ENCODE measurements at regions of chr19 and their contacts with region 1.

Region 1: DNA sequence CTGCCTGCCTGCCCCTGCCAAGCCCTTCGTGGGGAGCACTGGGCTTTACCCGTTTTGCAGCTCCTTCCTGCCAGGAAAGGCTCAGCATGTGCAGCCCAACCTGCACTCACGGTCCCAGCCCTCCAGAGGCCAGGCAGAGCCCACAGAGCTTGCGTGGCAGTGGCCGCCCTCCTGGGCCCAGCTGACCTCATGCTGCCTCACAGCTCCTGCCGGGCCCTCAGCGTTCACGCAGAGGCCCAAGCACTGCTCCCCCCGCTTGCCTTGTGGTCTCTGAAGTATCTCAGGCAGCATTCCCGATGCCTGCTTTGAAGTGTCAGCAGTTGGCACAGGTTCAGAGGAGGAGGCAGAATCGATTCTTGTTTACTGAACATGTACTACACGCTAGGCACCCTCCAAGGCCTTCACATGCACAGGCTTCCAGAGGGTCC is 32.5 kb downstream of the CAPN12 start:
- DNase-seq: no peak
- H3K4me3 ChIP-seq: no peak overlapping the region
- H3K27ac ChIP-seq: no peak overlapping the region
- H3K4me1 ChIP-seq: no peaks in the 10 kb centered on the region
- H3K27me3 ChIP-seq: no peaks in the 10 kb centered on the region; a peak in 1 of 7 replicates
- CTCF ChIP-seq: no peak
- EP300 ChIP-seq: no peak
- POLR2A ChIP-seq: no peak
- RAD21 ChIP-seq: no peak

Region 2: DNA sequence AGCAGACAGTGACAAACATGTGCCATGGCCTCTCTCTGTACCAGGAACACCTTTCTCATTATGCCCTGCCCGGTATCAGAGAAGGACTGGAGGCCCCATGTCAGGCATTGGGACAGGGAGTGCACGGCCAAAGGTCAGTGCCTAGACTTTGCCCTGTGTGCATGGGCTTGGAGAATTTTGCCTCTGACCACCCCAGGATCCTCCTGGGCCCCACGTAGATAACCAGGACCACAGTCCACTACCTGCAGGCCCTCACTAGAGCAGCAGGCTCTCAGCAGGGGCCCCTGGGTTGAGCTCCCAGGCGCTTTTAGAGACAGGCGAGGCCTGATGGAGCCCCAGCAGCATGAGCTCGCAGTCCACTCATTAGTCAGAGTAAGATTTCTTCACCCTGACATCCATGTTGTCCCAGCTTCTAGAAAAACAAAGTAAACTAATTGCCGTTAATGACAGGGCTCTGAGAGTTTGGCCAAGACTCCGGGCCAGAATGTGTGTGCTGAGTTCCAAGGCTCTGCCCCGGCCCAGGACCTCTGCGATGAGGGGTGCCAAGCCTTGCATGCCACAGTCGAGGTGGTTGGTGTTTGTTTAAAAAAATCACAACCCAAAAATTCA is 10.2 kb before region 1 on chr19:
- CTCF ChIA-PET with region 1: interaction called, 6 read pairs
- POLR2A ChIA-PET with region 1: interaction called, 13 read pairs
- DNase-seq: no peak
- H3K4me3 ChIP-seq: no peak overlapping the region
- H3K27ac ChIP-seq: no peak overlapping the region
- H3K4me1 ChIP-seq: peaks cover 0 to 16% (median 9%) of the 10 kb centered on the region in 4 experiments; a peak in 5 of 7 replicates
- H3K27me3 ChIP-seq: no peaks in the 10 kb centered on the region; a peak in 1 of 7 replicates
- CTCF ChIP-seq: no peak
- EP300 ChIP-seq: no peak
- POLR2A ChIP-seq: no peak
- RAD21 ChIP-seq: no peak

Region 3: DNA sequence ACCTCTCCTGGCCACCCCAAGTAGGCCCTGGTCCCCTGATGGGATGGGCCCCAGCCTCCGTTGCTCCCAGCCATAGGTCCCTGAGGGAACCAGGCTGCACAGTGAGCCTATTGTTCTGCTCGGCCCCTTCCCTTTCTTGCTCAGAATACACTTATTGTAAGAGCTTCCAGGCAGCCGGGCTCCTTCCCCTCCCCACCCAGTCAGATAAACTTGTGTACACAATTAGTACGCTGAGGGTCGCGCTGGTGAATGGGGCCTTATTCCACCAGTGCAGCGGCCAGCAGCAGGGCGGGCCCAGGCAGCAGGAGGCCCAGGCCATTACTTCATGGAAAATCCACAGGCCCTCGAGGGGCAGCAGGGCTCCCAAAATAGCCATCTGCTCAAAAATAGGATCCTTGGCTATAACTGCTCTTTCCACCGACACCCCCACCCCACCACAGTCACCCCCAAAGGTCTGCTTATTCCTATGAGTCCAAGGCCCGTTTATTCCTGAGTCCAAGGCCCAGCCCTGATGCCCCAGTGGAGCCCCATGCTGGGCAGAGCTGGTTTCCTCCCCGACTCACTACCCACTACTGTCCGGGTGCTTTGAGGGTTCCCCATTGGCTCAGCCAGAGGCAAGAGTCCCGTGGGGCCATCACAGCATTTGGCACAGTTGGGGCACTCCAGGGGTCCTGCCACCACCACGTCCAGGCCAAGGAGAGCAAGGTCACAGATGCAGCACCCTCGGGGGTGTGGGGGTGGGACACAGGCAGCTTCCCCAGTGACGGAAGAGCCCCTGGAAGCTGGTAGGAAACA is 10.4 kb after region 1 on chr19:
- CTCF ChIA-PET with region 1: interaction called, 11 read pairs
- POLR2A ChIA-PET with region 1: interaction called, 8 read pairs
- DNase-seq: no peak
- H3K4me3 ChIP-seq: no peak overlapping the region
- H3K27ac ChIP-seq: 0 out of 2 replicates have a peak overlapping the region, but pooled peaks have one; percentile 0
- H3K4me1 ChIP-seq: no peaks in the 10 kb centered on the region
- H3K27me3 ChIP-seq: no peaks in the 10 kb centered on the region
- CTCF ChIP-seq: no peak
- EP300 ChIP-seq: no peak
- POLR2A ChIP-seq: no peak
- RAD21 ChIP-seq: no peak

Region 4: GRCh38 chr19:38975214-38975860 is 263.6 kb after region 1 on chr19 and contains the start of gene FBXO17:
- CTCF ChIA-PET with region 1: no interaction called
- POLR2A ChIA-PET with region 1: no interaction called
- DNase-seq: peak in 1 of 2 experiments; percentile 84
- H3K4me3 ChIP-seq: peak within 1 kb of the TSS; percentile 48 to 82 (median 74)
- H3K27ac ChIP-seq: peak within 1 kb of the TSS; percentile 12; the same call in 1 of the 2 replicates
- H3K4me1 ChIP-seq: peaks cover 0 to 7% (median 3%) of the 10 kb centered on the region in 4 experiments; a peak in 3 of 7 replicates
- H3K27me3 ChIP-seq: 0 out of 7 replicates have a peak, but pooled peaks cover 0 to 3% (median 0%) of the 10 kb centered on the region in 4 experiments
- CTCF ChIP-seq: no peak
- EP300 ChIP-seq: no peak
- POLR2A ChIP-seq: no peak; a peak in 1 of 3 replicates
- RAD21 ChIP-seq: no peak
- total RNA-seq, gene FBXO17: 14.5 and 15.3 TPM in 2 replicates